Activated naive CD4-positive, alpha-beta T cell treated with anti-CD3 and anti-CD28 coated beads, Interleukin-2, amount 10 ng/mL, durations not matched to agents 7 days and 5 days (primary cell): ENCODE measurements at regions of chr3 and their contacts with region 1.

Region 1: DNA sequence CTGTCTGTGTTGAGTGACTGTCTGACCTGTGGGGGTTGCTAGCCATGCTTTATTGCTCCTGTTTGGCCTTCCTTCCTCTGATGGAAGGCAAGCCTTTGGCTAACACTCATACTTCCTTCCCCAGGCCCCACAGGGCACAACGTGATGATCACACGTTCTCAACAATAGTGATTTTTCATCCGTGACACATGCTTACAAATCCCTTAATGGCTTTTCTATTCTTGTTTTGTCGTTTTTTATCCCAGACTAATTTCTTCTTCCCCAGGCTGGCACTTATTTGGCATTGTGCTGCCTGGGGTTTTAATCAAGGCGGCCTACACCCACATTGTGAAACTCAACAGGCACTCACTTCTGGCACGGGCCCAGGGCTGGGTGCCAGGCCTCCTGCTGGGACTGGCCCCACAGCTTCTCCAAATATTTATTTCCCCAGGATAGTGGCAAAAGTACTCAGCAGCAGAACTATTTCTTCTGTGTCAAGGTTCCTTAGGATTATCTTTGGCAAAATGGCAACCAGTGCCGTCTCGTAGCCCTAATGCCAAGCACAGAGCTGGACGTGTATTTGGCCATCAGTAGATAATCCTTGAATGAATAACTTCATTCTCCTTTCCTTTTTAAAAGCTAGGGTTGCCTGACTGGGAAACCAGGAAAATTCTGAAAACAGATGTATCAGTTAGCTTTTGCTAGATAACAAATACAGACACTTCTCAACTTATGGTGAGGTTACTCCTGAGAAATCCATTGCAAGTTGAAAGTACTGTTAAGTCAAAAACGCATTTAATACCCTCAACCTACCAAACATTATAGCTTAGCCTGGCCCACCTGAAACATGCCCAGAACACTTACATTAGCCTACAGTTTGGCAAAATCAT is 30.6 kb downstream of the CMTM7 start:
- DNase-seq: no peak
- H3K4me3 Mint-ChIP-seq: no peak overlapping the region
- H3K27ac Mint-ChIP-seq: peak overlapping the region; percentile 53
- H3K4me1 Mint-ChIP-seq: peaks cover 94% of the 10 kb centered on the region
- H3K27me3 Mint-ChIP-seq: no peaks in the 10 kb centered on the region

Region 2: GRCh38 chr3:32432711-32433530 is 10.7 kb after region 1 on chr3:
- CTCF ChIA-PET with region 1: interaction called, 17 read pairs
- DNase-seq: peak; percentile 48
- H3K4me3 Mint-ChIP-seq: peak overlapping the region; percentile 56
- H3K27ac Mint-ChIP-seq: peak overlapping the region; percentile 94
- H3K4me1 Mint-ChIP-seq: peaks cover 90% of the 10 kb centered on the region
- H3K27me3 Mint-ChIP-seq: no peaks in the 10 kb centered on the region

Region 3: DNA sequence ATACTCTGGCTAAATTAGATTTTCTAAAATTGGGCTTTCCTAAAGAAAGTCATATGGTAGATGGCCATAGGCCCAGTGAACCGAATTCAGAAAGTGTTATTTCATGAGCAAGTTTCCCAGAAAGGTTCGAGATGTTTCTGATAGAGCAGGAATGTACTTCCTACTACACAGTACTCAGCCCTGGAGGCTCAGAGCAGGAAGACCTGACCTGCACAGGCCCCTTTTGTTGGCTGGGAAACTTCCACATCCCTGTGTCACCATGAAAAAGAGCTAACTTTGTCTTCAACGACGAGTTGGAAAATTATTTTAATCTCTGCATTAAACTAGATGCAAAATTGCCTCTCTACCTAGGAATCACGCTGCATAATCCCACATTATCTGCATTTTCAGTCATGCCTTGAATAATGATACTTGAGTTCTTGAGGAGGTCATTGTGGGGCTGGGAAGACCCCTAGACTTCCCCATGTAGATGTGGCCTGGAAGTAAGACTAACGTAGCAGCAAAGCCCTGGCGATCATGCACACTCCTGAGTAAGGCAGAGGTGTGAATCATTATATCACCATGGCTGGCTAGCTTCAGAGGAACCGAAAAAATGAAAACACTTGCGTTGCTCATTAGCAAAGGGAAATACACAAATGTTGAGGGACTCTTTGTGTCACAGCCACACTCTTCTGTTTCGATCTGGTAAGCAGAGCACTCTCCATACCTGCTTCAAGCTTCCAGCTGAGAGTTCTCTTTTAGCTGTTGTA is 16.5 kb after region 1 on chr3:
- CTCF ChIA-PET with region 1: interaction called, 17 read pairs
- DNase-seq: no peak
- H3K4me3 Mint-ChIP-seq: no peak overlapping the region
- H3K27ac Mint-ChIP-seq: peak overlapping the region; percentile 84
- H3K4me1 Mint-ChIP-seq: peaks cover 78% of the 10 kb centered on the region
- H3K27me3 Mint-ChIP-seq: no peaks in the 10 kb centered on the region

Region 4: DNA sequence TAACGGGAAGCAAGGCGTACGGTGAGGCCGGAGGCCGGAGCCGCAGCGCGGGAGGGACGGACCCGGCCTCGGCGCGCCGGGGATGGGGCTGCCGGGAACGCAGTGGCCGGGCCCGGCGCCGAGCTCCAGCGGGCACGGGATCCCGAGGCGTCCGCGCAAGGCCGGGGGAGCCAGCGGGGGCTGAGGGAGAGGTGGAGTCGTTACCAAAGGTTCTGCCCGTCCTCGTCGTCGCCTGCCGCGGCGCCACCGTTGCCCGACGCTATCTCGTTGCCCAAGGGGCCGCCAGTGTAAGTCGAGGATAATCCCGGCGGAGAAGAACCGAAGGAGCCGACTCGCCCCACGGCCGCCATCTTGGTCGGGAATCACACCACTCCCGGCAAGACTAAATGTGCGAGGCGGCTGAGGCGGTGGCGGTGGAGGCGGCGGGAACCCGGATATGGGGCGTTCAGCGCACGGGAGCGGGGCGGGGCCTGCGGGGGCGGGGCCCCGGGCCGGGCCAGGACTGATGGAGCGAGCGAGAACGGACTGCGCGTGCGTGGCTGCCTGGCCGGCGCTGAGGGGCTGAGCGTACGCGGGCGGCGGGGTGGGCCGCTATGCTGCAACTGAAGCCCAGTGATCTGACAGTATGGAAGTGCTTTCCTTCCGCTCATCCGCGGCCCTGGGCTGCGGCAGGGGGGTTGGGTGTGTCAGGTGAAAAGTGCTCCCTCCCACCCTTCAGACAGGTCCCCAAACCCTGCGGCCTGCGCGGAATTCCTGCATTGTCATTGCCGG is 148.4 kb after region 1 on chr3 and contains the start of gene DYNC1LI1:
- CTCF ChIA-PET with region 1: no interaction called
- DNase-seq: peak; percentile 96
- H3K4me3 Mint-ChIP-seq: peak within 1 kb of the TSS; percentile 81
- H3K27ac Mint-ChIP-seq: peak within 1 kb of the TSS; percentile 88
- H3K4me1 Mint-ChIP-seq: peaks cover 30% of the 10 kb centered on the region
- H3K27me3 Mint-ChIP-seq: peaks cover 4% of the 10 kb centered on the region